CD4-positive, alpha-beta T cell (primary cell): ENCODE measurements at regions of chr2 and their contacts with region 1.

Region 1: GRCh38 chr2:181334158-181334826 is 122.9 kb upstream of the ITGA4 start:
- DNase-seq: peak in 1 of 14 experiments; percentile 28
- ATAC-seq: no peak
- H3K4me3 ChIP-seq: no peak overlapping the region
- H3K4me3 Mint-ChIP-seq: no peak overlapping the region
- H3K27ac ChIP-seq: no peak overlapping the region
- H3K27ac Mint-ChIP-seq: no peak overlapping the region
- H3K4me1 ChIP-seq: no peaks in the 10 kb centered on the region
- H3K4me1 Mint-ChIP-seq: peaks cover 6% of the 10 kb centered on the region
- H3K27me3 ChIP-seq: no peaks in the 10 kb centered on the region
- H3K27me3 Mint-ChIP-seq: no peaks in the 10 kb centered on the region
- CTCF ChIP-seq: no peak

Region 2: GRCh38 chr2:181348107-181348837 is 14.0 kb after region 1 on chr2:
- CTCF ChIA-PET with region 1: no interaction called
- POLR2A ChIA-PET with region 1: no interaction called
- intact Hi-C with region 1: no loop called
- DNase-seq: no peak
- ATAC-seq: no peak
- H3K4me3 ChIP-seq: no peak overlapping the region
- H3K4me3 Mint-ChIP-seq: no peak overlapping the region
- H3K27ac ChIP-seq: no peak overlapping the region
- H3K27ac Mint-ChIP-seq: no peak overlapping the region
- H3K4me1 ChIP-seq: no peaks in the 10 kb centered on the region
- H3K4me1 Mint-ChIP-seq: no peaks in the 10 kb centered on the region
- H3K27me3 ChIP-seq: no peaks in the 10 kb centered on the region
- H3K27me3 Mint-ChIP-seq: no peaks in the 10 kb centered on the region
- CTCF ChIP-seq: no peak

Region 3: GRCh38 chr2:181374781-181375675 is 40.7 kb after region 1 on chr2:
- CTCF ChIA-PET with region 1: no interaction called
- POLR2A ChIA-PET with region 1: no interaction called
- intact Hi-C with region 1: loop called in 1 of 2 experiments (anchors 5 kb)
- DNase-seq: no peak
- ATAC-seq: no peak
- H3K4me3 ChIP-seq: no peak overlapping the region
- H3K4me3 Mint-ChIP-seq: no peak overlapping the region
- H3K27ac ChIP-seq: no peak overlapping the region
- H3K27ac Mint-ChIP-seq: no peak overlapping the region
- H3K4me1 ChIP-seq: peaks cover 17% of the 10 kb centered on the region
- H3K4me1 Mint-ChIP-seq: peaks cover 28% of the 10 kb centered on the region
- H3K27me3 ChIP-seq: no peaks in the 10 kb centered on the region
- H3K27me3 Mint-ChIP-seq: no peaks in the 10 kb centered on the region
- CTCF ChIP-seq: no peak